ENCODE measurements at regions of chr4 and their contacts with region 1.

Region 1: DNA sequence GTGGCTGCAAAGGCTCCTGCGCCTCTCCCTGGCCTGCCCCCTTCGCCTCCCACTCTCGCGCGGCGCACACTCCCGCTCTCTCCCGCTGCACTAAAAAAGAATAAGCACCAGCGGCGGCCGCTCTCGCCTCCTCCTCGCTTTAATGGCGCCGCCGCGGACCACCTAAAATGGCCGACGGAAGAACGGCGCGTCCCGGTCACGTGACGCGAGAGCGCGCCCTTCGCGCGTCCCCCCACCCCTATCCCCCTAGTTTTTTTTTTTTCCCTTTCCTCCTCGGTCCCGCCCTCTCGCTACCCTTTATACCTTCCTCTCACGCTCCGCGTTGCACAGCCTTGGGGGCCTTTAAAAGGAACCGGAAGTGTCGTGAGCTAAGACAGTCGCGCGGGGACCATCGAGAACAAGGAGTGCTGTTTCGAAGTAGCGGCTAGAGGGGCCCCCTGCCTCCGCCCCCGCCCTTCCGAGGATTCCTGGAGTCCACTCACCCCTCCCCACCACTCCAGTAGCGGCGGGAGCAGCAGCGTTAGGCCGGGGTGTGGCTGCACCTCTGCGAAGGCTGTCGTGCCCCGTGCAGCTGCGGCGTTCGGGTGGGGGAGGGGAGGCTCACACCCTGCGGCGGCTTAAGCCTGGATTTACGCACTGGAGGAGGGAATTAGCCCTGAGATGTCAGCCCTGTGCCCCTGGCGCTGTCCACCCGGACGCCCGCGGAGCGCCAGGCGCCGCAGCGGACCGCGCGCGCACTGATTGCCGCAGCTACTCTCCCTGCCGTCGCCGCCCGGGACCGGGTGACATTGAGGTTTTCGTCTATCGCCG is at the start of gene HNRNPD:
- DNase-seq: peak; percentile 99
- H3K4me3 ChIP-seq: peak within 1 kb of the TSS; percentile 97
- H3K27ac ChIP-seq: peak within 1 kb of the TSS; percentile 86
- H3K27me3 ChIP-seq: no peaks in the 10 kb centered on the region
- CTCF ChIP-seq: no peak

Region 2: DNA sequence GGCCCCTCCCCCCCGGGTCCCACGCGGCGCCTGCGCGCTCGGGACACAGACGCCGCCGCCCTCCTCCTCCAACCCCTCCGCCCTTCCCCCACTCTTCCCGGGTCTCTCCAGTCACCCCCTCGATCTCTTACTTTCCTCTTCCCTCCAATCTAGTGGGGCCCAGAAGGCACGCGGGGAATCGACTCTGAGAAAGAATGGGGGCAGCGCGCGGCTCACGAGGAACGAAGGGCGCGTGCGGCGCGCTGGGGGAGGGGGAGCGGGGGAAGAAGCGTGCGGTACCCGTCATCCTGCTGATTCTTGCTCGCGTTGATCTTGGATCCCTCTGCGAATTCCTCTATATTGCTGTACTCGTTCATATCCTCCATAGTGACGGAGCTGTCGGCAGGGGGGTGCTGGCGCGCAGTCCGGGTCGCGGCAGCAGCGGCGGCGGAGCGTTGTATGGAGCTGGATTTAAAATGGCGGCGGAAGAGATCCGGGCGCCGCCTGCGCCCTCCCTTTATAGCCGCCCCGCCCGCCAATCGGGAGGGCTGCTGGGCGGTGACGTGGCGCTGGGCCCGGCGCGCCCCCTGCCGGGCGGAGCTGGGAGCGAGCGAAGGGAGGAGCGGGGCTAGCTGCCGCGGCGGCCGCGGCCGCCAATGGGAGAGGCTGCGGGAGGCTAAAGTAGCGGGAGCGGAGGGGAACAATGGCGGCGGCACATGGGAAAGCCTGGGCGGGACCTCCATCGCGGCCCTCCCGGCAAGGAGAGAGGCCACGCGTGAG is 55.1 kb after region 1 on chr4:
- in situ Hi-C with region 1: loop called (anchors 10 kb)
- DNase-seq: peak; percentile 86
- H3K4me3 ChIP-seq: peak overlapping the region; percentile 93
- H3K27ac ChIP-seq: peak overlapping the region; percentile 91
- H3K27me3 ChIP-seq: no peaks in the 10 kb centered on the region
- CTCF ChIP-seq: peak; percentile 58

Region 3: DNA sequence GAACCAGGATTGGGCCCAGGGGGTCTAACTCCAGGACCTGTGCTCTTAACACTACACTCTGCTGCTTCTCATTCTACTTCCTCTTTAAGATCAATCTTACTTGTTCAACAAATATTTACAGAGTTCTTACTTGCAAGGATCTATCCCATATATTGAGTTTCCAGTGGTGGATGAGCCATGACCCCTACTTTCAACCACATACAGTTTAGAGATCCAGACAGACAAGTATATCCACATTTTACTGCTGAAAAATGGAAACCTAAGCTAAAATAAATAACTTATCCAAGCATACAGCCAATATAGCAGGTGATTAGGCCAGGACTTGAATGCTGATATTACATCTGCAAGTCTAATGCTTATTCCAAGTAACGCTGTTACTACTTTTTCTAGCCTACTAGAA is 169.1 kb after region 1 on chr4:
- in situ Hi-C with region 1: no loop called
- DNase-seq: no peak
- H3K4me3 ChIP-seq: no peak overlapping the region
- H3K27ac ChIP-seq: no peak overlapping the region
- H3K27me3 ChIP-seq: no peaks in the 10 kb centered on the region
- CTCF ChIP-seq: no peak

Measured in brain microvascular endothelial cell (primary cell).